Activated T-helper 2 cell treated with anti-CD3 and anti-CD28 coated beads, Interferon-gamma antibody, Interleukin-2, Interleukin-4, amounts not matched to agents 10 μg/mL and 5 μg/mL and 100 μg/mL, durations not matched to agents 14 hours and 24 hours and 36 hours (primary cell): ENCODE measurements at regions of chr14 and their contacts with region 1.

Region 1: DNA sequence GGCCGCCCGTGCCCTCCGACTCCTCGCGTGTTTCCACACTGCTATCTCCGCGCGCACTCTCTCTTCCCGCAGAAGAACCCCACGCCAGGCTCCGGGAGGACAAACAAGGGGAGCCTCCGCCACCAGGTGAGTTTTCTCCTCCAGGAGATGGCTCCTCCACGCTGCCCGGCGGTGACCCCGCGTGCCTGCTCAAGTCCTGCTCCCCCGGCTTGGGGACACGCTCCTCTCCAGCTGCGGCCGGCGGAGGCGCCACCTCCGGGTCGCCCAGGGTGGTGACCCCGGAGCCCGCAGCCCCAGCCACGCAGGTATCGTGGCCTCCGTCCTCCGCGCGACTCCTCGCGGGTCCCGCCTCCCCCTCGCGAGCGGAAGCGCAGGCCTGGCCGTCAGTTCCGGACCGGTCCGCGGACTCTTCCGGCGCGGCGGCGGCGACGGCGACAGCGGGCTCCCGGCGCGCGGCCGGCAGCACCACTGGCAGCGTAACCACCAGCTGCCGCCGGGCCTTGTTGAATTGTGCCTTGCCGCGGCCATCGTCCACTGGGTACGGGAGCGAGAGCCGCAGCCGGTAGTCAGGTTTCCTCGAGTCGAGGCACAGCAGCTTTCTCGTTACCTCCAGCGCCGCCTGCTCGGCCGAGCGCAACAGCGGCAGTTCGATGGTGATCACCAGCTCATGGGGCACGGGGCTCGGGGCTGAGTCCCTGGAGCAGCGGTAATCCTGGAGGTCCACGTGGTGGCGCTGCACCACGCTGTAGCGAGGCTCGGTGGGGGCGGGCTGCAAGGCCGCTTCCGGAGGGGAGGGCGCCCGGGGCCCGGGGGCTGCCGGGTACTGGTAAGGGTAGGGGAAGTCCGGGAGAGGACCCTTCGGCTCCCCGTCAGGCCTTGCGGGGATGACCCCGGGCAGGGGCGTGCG is 1.2 kb downstream of the DNAAF2 start:
- DNase-seq: peak; percentile 92
- H3K4me3 Mint-ChIP-seq: peak overlapping the region; percentile 99
- H3K27ac Mint-ChIP-seq: peak overlapping the region; percentile 97
- H3K4me1 Mint-ChIP-seq: peaks cover 31% of the 10 kb centered on the region
- H3K27me3 Mint-ChIP-seq: no peaks in the 10 kb centered on the region

Region 2: GRCh38 chr14:49585803-49586672 is 47.9 kb before region 1 on chr14 and contains the start of gene RPS29:
- intact Hi-C with region 1: loop called (anchors 1 kb)
- DNase-seq: peak; percentile 99
- H3K4me3 Mint-ChIP-seq: peak within 1 kb of the TSS; percentile 92
- H3K27ac Mint-ChIP-seq: peak within 1 kb of the TSS; percentile 98
- H3K4me1 Mint-ChIP-seq: peaks cover 33% of the 10 kb centered on the region
- H3K27me3 Mint-ChIP-seq: no peaks in the 10 kb centered on the region
- total RNA-seq, gene RPS29: 1,969 and 2,120 TPM in 2 replicates

Region 3: DNA sequence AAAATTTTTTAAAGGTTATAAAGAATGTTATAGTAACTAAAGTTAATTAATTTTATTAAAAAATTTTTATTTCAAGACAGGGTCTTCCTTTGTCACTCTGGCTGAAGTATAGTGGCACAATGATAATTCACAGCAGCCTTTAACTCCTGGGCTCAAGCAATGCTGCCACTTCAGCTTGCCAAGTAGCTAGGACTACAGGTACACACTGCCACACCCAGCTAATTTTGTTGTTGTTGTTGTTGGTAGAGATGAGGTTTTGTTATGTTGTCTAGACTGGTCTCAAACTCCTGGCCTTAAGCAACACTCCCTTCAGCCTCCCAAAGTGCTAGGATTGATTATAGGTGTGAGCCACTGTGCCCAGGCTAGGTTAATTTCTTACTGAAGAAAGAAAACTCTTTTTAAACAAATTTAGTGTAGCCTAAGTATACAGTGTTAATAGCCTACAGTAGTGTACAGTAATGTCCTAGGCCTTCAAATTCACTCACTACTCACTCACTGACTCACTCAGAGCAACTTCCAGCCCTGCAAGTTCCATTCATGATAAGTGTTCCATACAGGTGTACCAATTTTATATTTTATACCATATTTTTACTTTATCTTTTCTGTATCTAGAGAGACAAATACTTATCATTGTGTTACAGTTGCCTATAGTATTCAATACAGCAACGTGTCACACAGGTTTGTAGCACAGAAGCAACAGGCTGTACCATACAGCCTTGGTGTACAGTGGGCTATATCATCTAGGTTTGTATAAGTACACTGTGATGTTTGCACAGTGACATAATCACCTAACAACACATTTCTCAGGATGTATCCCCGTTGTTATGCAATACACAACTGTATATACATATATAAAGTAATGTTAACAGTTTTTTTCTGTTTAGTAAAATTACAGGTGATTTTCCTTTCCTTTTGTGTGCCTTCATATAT is 25.9 kb after region 1 on chr14:
- intact Hi-C with region 1: no loop called
- DNase-seq: no peak
- H3K4me3 Mint-ChIP-seq: no peak overlapping the region
- H3K27ac Mint-ChIP-seq: no peak overlapping the region
- H3K4me1 Mint-ChIP-seq: peaks cover 3% of the 10 kb centered on the region
- H3K27me3 Mint-ChIP-seq: no peaks in the 10 kb centered on the region

Region 4: GRCh38 chr14:49692811-49693734 is 59.2 kb after region 1 on chr14 and contains the start of gene KLHDC1:
- intact Hi-C with region 1: loop called (anchors 2 kb)
- DNase-seq: peak; percentile 68
- H3K4me3 Mint-ChIP-seq: peak within 1 kb of the TSS; percentile 84
- H3K27ac Mint-ChIP-seq: peak within 1 kb of the TSS; percentile 84
- H3K4me1 Mint-ChIP-seq: peaks cover 30% of the 10 kb centered on the region
- H3K27me3 Mint-ChIP-seq: no peaks in the 10 kb centered on the region
- total RNA-seq, gene KLHDC1: 0.78 and 0.96 TPM in 2 replicates

Region 5: GRCh38 chr14:49828640-49829039 is 194.7 kb after region 1 on chr14:
- intact Hi-C with region 1: loop called (anchors 1 kb)
- DNase-seq: no peak
- H3K4me3 Mint-ChIP-seq: no peak overlapping the region
- H3K27ac Mint-ChIP-seq: no peak overlapping the region
- H3K4me1 Mint-ChIP-seq: no peaks in the 10 kb centered on the region
- H3K27me3 Mint-ChIP-seq: no peaks in the 10 kb centered on the region

Region 6: GRCh38 chr14:50311975-50312733 is 678.3 kb after region 1 on chr14 and contains the starts of genes DMAC2L and L2HGDH:
- intact Hi-C with region 1: loop called (anchors 5 kb)
- DNase-seq: peak; percentile 89
- H3K4me3 Mint-ChIP-seq: peak within 1 kb of the TSS; percentile 91
- H3K27ac Mint-ChIP-seq: peak within 1 kb of the TSS; percentile 98
- H3K4me1 Mint-ChIP-seq: peaks cover 47% of the 10 kb centered on the region
- H3K27me3 Mint-ChIP-seq: no peaks in the 10 kb centered on the region
- total RNA-seq, gene DMAC2L: 13.6 and 16.2 TPM in 2 replicates
- total RNA-seq, gene L2HGDH: 14.1 and 14.2 TPM in 2 replicates